ENCODE measurements at regions of chr4 and their contacts with region 1.

Region 1: GRCh38 chr4:174764105-174764729 is 64.8 kb downstream of the GLRA3 start:
- DNase-seq: peak; percentile 79
- H3K4me3 ChIP-seq: no peak overlapping the region
- H3K27ac ChIP-seq: no peak overlapping the region
- H3K4me1 ChIP-seq: peaks cover 4% of the 10 kb centered on the region
- CTCF ChIP-seq: peak; percentile 97

Region 2: GRCh38 chr4:174461466-174462106 is 302.6 kb before region 1 on chr4:
- CTCF ChIA-PET with region 1: no interaction called
- POLR2A ChIA-PET with region 1: no interaction called
- intact Hi-C with region 1: no loop called
- DNase-seq: no peak
- H3K4me3 ChIP-seq: no peak overlapping the region
- H3K27ac ChIP-seq: no peak overlapping the region
- H3K4me1 ChIP-seq: no peaks in the 10 kb centered on the region
- CTCF ChIP-seq: no peak

Region 3: GRCh38 chr4:175017751-175018150 is 253.5 kb after region 1 on chr4:
- CTCF ChIA-PET with region 1: no interaction called
- POLR2A ChIA-PET with region 1: no interaction called
- intact Hi-C with region 1: no loop called
- DNase-seq: no peak
- H3K4me3 ChIP-seq: no peak overlapping the region
- H3K27ac ChIP-seq: no peak overlapping the region
- H3K4me1 ChIP-seq: no peaks in the 10 kb centered on the region
- CTCF ChIP-seq: no peak

Region 4: GRCh38 chr4:175109933-175110332 is 345.7 kb after region 1 on chr4:
- CTCF ChIA-PET with region 1: no interaction called
- POLR2A ChIA-PET with region 1: no interaction called
- intact Hi-C with region 1: loop called (anchors 10 kb)
- DNase-seq: peak; percentile 22
- H3K4me3 ChIP-seq: no peak overlapping the region
- H3K27ac ChIP-seq: no peak overlapping the region
- H3K4me1 ChIP-seq: no peaks in the 10 kb centered on the region
- CTCF ChIP-seq: peak; percentile 59

Region 5: DNA sequence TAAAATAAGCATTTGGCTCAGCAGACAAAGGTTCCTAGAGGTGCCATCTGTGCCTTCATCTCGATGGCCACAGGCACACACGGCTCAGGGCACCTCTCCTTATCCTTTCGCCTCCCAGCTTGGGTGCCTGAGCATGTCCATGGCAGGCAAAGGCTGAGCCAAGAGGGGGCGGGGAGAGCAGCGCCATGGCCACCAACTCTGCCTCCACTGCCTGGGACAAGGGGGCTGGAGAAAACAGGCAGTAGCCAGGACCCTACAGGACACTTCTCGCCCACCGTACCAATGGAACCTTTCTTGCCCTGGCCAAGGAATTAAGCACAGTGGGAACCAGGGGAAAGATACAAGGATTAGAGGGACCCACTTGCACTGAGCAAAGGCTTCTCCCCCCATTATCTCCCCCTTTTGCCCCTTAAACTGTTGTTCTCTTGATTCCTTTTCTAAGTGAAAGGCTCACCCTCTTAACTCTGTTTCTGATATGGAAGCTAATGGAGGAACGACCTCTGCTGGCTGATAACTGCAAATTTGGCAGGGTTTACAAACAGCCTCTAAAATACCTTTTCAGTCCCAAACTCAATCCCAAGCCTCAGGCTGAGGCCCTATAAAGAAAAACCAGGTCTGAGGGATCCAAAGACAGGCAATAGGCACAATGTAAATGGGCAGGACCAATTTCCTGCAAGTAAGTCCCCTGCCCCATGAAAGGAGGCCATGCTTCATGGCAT is 489.1 kb after region 1 on chr4:
- CTCF ChIA-PET with region 1: interaction called, 4 read pairs
- POLR2A ChIA-PET with region 1: no interaction called
- intact Hi-C with region 1: loop called (anchors 1 kb)
- DNase-seq: peak; percentile 54
- H3K4me3 ChIP-seq: no peak overlapping the region
- H3K27ac ChIP-seq: no peak overlapping the region
- H3K4me1 ChIP-seq: no peaks in the 10 kb centered on the region
- CTCF ChIP-seq: peak; percentile 77

Region 6: GRCh38 chr4:175443547-175443946 is 679.3 kb after region 1 on chr4:
- CTCF ChIA-PET with region 1: no interaction called
- POLR2A ChIA-PET with region 1: interaction called, 3 read pairs
- intact Hi-C with region 1: loop called (anchors 10 kb)
- DNase-seq: peak; percentile 39
- H3K4me3 ChIP-seq: no peak overlapping the region
- H3K27ac ChIP-seq: no peak overlapping the region
- H3K4me1 ChIP-seq: peaks cover 6% of the 10 kb centered on the region
- CTCF ChIP-seq: peak; percentile 56; the same call in 1 of the 2 replicates

Region 7: DNA sequence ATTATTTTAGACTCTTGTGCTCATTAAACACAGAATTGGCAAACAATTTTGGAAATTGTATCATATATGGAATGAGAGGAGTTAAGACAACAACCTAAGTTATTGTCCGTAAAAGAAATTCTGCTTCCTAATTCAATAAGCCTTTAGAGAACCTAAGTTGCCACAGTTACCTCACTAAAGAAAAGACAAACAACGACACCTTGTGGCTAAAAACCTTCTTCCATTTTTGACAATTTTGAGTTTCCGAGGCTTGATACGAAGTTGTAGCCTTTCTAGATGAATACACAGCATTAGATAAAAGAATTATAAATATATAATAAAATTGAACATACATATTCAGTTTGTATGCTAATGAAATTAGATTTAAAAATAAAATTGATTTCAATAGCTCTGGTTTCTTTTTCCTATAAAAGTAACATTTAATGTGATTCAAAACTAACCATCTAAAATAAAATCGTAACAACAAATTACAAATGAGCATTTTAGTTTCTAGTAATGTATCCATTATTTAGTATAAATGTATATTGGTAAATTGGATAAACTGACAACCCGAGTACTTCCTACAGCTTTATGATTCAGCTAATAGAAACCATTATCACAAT is 772.7 kb after region 1 on chr4:
- CTCF ChIA-PET with region 1: no interaction called
- POLR2A ChIA-PET with region 1: interaction called, 5 read pairs
- intact Hi-C with region 1: loop called (anchors 1 kb)
- DNase-seq: peak; percentile 82
- H3K4me3 ChIP-seq: no peak overlapping the region
- H3K27ac ChIP-seq: no peak overlapping the region
- H3K4me1 ChIP-seq: peaks cover 4% of the 10 kb centered on the region
- CTCF ChIP-seq: peak; percentile 89

Measured in OCI-LY7 (cell line).